Right ventricle myocardium superior (tissue), 1 donor: ENCODE measurements at regions of chr1 and their contacts with region 1.

Region 1: DNA sequence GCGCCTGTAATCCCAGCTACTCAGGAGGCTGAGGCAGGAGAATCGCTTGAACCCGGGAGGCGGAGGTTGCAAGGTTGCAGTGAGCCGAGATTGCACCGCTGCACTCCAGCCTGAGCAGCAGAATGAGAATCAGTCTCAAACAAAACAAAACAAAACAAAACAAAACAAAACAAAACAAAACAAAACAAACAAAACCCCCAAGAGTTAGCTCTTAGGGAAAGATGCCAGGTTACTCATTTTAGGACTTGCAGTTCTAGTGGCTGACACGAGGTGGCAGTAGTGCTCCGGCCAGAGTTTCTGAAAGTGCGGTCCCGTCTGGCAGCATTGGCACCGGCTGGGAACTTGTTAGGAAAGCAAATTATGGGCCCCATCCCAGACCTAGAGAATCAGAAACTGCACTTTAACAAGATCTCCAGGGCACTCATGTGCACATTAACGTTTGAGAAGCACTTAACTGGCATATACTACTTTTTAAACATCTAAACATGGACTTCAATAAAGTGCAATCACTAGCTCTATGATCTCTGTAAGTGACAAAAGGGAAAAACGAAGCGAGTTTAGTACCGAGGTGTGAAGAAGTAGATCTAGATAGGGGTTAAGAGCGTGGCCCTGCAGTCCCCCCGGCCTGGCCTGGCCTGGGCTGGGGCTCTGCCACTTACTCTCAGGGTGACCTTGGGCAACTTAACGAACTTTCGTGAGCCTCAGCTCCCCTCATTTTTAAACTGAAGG is 41.9 kb upstream of the TNFRSF1B start:
- DNase-seq: peak; percentile 90
- ATAC-seq: peak; percentile 87

Region 2: DNA sequence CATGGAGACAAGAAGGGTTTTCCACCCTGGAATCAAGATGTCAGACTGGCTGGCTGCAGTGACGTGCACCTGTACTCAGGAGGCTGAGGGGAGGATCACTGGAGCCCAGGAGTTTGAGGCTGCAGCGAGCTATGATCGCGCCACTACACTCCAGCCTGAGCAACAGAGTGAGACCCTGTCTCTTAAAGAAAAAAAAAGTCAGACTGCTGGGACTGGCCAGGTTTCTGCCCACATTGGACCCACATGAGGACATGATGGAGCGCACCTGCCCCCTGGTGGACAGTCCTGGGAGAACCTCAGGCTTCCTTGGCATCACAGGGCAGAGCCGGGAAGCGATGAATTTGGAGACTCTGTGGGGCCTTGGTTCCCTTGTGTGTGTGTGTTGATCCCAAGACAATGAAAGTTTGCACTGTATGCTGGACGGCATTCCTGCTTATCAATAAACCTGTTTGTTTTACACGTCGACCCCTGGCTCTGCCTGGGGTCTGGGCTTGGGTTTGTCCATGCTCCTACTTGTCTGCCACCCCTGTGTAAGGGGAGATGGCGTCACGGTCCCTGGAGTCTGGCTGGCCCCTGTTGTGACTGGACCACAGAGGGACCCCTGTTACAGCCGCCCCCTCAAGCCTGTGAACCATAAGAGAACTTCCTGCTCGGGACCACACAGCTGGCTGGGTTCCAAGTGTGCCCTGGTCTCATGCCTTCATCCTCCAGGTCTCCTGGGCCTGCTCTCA is 84.1 kb after region 1 on chr1:
- intact Hi-C with region 1: loop called (anchors 1 kb)
- DNase-seq: peak; percentile 92
- ATAC-seq: peak; percentile 95